Heart right ventricle (tissue), 16 donors: ENCODE measurements at regions of chr6 and their contacts with region 1.

Region 1: GRCh38 chr6:30883685-30884520 is at the start of gene DDR1:
- DNase-seq: peak; percentile 73 to 76
- ATAC-seq: peak; percentile 63 to 89 (median 73)
- H3K4me3 ChIP-seq: peak within 1 kb of the TSS; percentile 53 to 96 (median 74)
- H3K27ac ChIP-seq: peak within 1 kb of the TSS; percentile 43 to 90 (median 84)
- H3K4me1 ChIP-seq: peaks cover 13 to 58% (median 36%) of the 10 kb centered on the region in 9 donors
- H3K27me3 ChIP-seq: peaks cover 0 to 22% (median 0%) of the 10 kb centered on the region in 7 donors
- CTCF ChIP-seq: no peak
- total RNA-seq, gene DDR1: 15.5 to 49.2 (median 26.9) TPM

Region 2: DNA sequence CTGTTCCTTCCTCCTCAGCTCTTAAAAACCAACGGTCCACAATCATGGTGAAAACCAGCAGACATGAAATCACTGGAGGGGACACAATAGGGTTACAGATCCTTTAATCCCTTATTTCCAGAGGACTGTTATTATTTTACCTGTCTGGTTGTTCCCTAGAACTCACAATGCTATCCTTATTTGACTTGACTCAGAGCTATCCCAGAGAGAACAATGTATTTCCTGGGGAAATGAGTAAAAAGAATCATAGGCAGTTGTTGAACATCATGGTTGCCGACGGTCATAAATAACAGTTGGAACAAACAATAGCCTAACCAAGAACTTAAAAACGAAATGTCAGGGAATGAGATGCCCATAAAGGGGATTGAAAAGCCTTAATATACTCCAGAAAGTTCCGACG is 1417.7 kb before region 1 on chr6:
- intact Hi-C with region 1: no loop called
- DNase-seq: no peak
- ATAC-seq: no peak
- H3K4me3 ChIP-seq: no peak overlapping the region
- H3K27ac ChIP-seq: no peak overlapping the region
- H3K4me1 ChIP-seq: no peaks in the 10 kb centered on the region
- H3K27me3 ChIP-seq: peaks cover 0 to 9% (median 0%) of the 10 kb centered on the region in 7 donors
- CTCF ChIP-seq: no peak

Region 3: DNA sequence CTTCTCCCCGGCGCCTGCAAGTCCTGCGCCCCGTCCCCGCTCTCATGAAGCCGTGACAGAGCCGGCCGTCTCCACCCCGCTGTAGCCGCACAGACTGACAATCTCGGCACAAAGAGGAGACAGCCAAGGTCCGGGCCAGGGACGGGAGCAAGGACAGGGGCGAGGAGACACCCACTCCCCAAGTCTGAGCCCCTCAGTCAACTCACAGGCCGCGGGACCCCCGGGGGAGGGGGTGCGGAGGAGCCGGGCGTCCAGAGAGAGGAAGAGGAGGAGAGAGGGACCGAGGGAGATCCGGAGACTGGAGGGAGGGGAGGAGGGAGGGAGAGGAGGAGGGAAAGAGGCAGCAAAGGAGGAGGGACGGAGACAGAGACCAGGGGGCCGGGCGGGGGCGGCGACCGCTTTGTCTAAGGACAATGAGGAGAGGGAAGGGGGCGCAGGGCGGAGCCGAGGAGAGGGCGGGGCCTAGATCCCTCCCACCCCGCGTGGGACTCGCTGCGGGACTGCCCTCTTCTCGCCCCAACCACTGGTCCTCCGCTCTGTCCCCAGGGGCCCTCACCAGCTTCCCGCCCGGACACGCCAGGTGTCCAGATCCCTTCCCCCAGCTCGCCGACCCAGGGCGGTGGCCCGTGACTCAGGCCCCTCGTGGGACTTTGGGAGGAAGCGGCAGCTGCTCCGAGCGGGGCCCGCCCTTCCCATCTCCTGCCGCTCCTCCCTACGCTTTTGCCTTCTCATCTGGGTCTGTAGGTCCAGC is 196.8 kb before region 1 on chr6:
- intact Hi-C with region 1: loop called in 2 of 10 experiments (anchors 5 to 10 kb)
- DNase-seq: peak; percentile 96 to 98
- ATAC-seq: peak; percentile 73 to 87 (median 80)
- H3K4me3 ChIP-seq: peak overlapping the region; percentile 44 to 90 (median 80)
- H3K27ac ChIP-seq: peak overlapping the region; percentile 94 to 100 (median 98)
- H3K4me1 ChIP-seq: peaks cover 20 to 80% (median 58%) of the 10 kb centered on the region in 9 donors
- H3K27me3 ChIP-seq: no peaks in the 10 kb centered on the region
- CTCF ChIP-seq: no peak

Region 4: GRCh38 chr6:30730601-30731435 is 153.1 kb before region 1 on chr6:
- intact Hi-C with region 1: loop called in 2 of 10 experiments (anchors 10 kb)
- DNase-seq: peak; percentile 70 to 71
- ATAC-seq: peak; percentile 56 to 83 (median 81)
- H3K4me3 ChIP-seq: no peak overlapping the region
- H3K27ac ChIP-seq: peak overlapping the region in 5 of 10 donors; percentile 7 to 64 (median 10)
- H3K4me1 ChIP-seq: peaks cover 6 to 27% (median 16%) of the 10 kb centered on the region in 9 donors
- H3K27me3 ChIP-seq: no peaks in the 10 kb centered on the region
- CTCF ChIP-seq: peak; percentile 41 to 72 (median 63)

Region 5: GRCh38 chr6:30907758-30908591 is 24.1 kb after region 1 on chr6 and contains the start of gene GTF2H4:
- intact Hi-C with region 1: loop called in 1 of 10 experiments (anchors 1 kb)
- DNase-seq: peak; percentile 94 to 98
- ATAC-seq: peak; percentile 98 to 100 (median 99)
- H3K4me3 ChIP-seq: peak within 1 kb of the TSS; percentile 47 to 94 (median 79)
- H3K27ac ChIP-seq: peak within 1 kb of the TSS in 8 of 10 donors; percentile 22 to 77 (median 63)
- H3K4me1 ChIP-seq: peaks cover 0 to 21% (median 11%) of the 10 kb centered on the region in 9 donors
- H3K27me3 ChIP-seq: no peaks in the 10 kb centered on the region
- CTCF ChIP-seq: no peak
- total RNA-seq, gene GTF2H4: 8.3 to 25.1 (median 12.5) TPM

Region 6: DNA sequence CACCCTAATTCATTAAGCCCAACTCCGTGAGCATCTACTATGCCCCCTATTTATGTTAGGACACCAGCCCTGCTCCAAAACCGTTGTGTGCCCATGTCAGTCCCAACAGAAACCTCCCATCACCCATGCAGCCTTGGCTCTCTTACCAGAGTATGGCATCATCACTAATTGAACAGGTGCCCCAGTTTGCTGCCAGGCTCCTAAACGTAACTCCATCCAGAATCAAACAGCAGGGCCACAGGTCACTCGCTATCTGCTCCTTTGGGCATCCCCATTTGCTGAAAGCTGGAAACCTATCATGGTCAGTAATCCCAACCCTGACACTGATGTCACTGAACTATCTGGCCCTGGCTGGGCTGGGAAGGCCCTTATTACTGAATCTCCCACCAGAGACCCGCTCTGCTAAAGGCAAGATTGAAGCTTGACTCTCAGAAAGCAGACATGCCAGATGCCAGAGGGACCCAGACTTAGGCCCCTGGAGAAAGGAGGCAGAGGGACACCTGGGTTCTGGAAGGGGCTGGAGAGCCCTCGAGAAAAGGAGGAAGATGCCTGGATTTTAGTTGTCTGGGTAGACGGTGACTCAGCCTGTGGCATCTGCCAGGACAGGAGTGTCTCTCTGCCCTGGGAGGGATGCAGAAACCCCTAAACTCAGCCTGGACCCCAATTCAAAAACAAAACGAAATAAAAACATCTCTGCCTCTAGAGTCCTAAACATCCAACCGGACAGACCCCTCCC is 70.9 kb after region 1 on chr6:
- intact Hi-C with region 1: no loop called
- DNase-seq: no peak
- ATAC-seq: peak in 5 of 8 donors; percentile 3 to 40 (median 20)
- H3K4me3 ChIP-seq: peak overlapping the region in 9 of 10 donors; percentile 30 to 60 (median 51)
- H3K27ac ChIP-seq: peak overlapping the region in 5 of 10 donors; percentile 10 to 47 (median 41)
- H3K4me1 ChIP-seq: peaks cover 0 to 18% (median 14%) of the 10 kb centered on the region in 9 donors
- H3K27me3 ChIP-seq: peaks cover 0 to 82% (median 5%) of the 10 kb centered on the region in 7 donors
- CTCF ChIP-seq: no peak